Gastrocnemius medialis (tissue), 4 donors: ENCODE measurements at regions of chr4 and their contacts with region 1.

Region 1: DNA sequence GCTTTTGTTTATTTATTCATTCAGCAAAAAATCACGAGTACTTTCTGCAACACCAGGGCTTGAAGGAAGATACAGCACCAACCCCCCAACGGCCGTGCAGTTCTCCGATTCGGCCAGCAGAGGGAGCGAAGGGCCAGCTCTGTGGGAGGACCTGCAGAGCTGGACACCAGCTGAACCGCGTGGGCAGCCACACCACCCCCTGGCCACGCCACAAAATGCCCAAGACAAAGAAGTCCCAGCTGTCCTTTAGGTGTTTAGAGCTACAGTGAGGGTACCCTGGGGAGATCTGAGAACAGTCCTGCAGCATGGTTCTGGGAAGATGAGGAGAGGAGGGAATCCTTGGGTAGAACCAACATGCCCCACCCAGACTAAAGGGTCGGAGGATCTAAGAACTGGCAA is 83.1 kb downstream of the RELL1 start:
- DNase-seq: peak; percentile 63 to 78
- ATAC-seq: peak; percentile 84 to 93
- H3K4me3 ChIP-seq: no peak overlapping the region
- H3K27ac ChIP-seq: no peak overlapping the region
- H3K4me1 ChIP-seq: no peaks in the 10 kb centered on the region
- H3K27me3 ChIP-seq: no peaks in the 10 kb centered on the region
- CTCF ChIP-seq: peak; percentile 95 to 99 (median 98)
- POLR2A ChIP-seq: no peak

Region 2: DNA sequence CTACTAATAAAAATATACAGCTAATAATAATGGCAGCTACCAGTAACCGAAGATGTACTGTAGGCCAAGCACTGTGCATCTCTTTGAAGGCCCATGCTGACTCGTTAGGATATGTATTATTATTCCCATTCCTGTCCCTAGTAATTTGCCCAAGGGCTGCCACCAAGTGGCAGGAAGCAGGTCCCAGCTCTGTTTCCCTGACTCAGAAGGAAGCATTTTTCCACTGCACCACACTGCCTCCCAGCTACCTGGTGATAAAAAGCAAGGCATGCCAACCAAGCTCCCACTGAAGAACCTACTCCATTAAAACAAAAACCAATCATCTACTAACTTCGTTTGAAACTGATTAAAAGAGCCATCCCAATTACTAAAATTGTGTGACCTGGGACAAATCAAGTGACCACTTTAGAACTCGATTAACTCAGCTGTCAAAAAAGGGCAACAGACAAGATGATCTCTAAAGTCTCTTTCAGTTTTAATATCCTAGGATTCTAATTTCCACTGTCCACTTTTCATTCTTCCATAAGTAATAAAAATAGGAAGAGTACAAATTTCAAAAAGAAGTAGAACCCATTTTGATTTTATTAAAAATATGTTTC is 199.1 kb after region 1 on chr4:
- in situ Hi-C with region 1: loop called in 2 of 4 experiments (anchors 10 kb)
- intact Hi-C with region 1: loop called (anchors 1 kb)
- DNase-seq: peak in 1 of 2 donors; percentile 57
- ATAC-seq: peak; percentile 73 to 92
- H3K4me3 ChIP-seq: no peak overlapping the region
- H3K27ac ChIP-seq: no peak overlapping the region
- H3K4me1 ChIP-seq: peaks cover 12 to 15% of the 10 kb centered on the region in 2 donors
- H3K27me3 ChIP-seq: no peaks in the 10 kb centered on the region
- CTCF ChIP-seq: peak in 4 of 5 experiments; percentile 51 to 73 (median 56)
- POLR2A ChIP-seq: no peak

Region 3: GRCh38 chr4:38034986-38035882 is 432.2 kb after region 1 on chr4:
- in situ Hi-C with region 1: loop called (anchors 10 to 25 kb)
- intact Hi-C with region 1: loop called (anchors 1 kb)
- DNase-seq: no peak
- ATAC-seq: peak; percentile 33 to 74
- H3K4me3 ChIP-seq: no peak overlapping the region
- H3K27ac ChIP-seq: no peak overlapping the region
- H3K4me1 ChIP-seq: peaks cover 0 to 4% of the 10 kb centered on the region in 2 donors
- H3K27me3 ChIP-seq: no peaks in the 10 kb centered on the region
- CTCF ChIP-seq: peak; percentile 38 to 69 (median 64)
- POLR2A ChIP-seq: no peak